Dorsolateral prefrontal cortex (tissue), 120 donors: ENCODE measurements at regions of chr15 and their contacts with region 1.

Region 1: GRCh38 chr15:44426975-44427755 is at the start of gene CTDSPL2:
- DNase-seq: peak; percentile 89 to 99 (median 97)
- H3K4me3 ChIP-seq: peak within 1 kb of the TSS; percentile 58 to 100 (median 92)
- H3K27ac ChIP-seq: peak within 1 kb of the TSS; percentile 92 to 100 (median 98)
- H3K27me3 ChIP-seq: no peaks in the 10 kb centered on the region
- CTCF ChIP-seq: peak in 54 of 56 donors; percentile 22 to 80 (median 60)
- total RNA-seq, gene CTDSPL2: 25.6 to 57.8 (median 37.3) TPM

Region 2: DNA sequence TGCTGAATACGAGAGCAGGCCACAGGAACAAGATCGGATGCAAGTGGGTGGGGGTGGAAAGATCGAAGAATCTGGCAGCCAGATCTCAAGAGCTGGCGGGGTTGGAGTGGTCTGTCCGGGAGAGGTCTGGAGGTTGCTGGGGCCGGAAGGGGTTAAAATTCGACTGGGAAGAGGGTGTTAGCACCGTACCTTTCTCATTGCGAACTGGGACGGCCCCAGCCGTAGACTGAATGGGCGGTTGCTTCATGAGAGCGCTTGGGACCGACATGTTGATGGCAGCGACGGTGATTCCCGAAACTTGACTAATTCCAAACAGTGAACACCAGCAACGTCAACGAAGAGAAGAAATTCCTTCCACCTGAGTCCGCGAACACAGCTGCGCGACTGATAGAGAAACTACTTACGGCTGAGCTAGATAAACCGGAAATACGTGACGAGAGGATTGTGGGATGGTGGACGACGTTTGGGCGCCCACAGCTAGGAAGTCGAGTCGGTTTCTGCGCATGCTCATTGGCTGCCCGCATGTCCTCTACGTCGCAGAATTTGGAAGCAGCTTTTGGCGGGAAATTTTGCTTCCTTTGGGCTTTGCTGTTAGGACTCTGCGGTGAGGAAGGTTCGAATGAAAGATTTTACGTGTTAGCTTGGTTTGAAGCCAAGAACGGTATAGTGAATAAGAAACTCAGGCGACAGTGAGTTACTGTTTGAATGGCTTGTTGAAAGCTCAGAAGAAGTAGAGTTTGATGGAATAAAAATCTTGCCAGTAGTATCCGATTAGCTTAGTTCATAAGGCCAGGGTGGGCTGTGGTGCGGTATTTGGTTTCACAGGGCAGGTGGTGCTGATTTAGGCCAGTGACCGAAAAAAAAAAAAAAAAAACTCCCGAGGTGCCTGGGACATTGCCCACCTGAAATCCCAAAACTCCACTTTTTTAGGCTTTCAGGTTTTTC is 602.6 kb before region 1 on chr15 and contains the start of gene MFAP1:
- intact Hi-C with region 1: loop called in 1 of 2 experiments (anchors 10 kb)
- DNase-seq: peak; percentile 88 to 97 (median 94)
- H3K4me3 ChIP-seq: peak within 1 kb of the TSS; percentile 63 to 99 (median 89)
- H3K27ac ChIP-seq: peak within 1 kb of the TSS in 58 of 59 donors; percentile 9 to 95 (median 83)
- H3K27me3 ChIP-seq: no peaks in the 10 kb centered on the region
- CTCF ChIP-seq: peak in 35 of 56 donors; percentile 10 to 58 (median 28)
- total RNA-seq, gene MFAP1: 15.9 to 30.4 (median 23.4) TPM

Region 3: DNA sequence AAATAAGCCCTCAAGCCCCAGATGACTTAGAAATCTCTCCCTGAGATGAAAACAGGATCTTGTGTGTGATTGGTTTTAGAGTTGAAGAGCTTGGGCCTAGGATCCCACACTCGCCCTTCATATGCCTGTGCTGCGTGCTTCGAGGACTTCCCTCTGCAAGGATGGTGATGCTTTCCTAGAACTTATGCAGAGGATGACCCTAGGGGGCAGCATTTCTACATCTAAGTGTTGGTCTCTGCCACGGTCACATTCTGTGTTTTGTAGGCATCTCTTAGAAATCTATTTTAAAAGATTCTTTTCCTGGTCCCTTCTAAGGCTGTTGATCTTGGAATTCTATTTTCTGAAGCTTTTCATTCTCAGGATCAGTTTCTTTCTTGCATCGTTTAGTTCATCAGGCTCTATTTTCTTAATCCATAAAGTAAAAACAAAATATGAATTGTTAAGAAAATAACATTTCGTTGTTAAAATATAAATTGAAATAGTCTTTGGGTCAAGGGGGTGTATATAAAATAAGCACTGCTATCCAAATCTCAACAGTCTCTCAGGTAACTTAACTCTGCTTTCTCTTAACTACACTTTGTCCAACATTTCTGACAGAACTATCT is 554.6 kb before region 1 on chr15:
- intact Hi-C with region 1: loop called in 1 of 2 experiments (anchors 10 kb)
- DNase-seq: peak in 8 of 10 donors; percentile 35 to 81 (median 61)
- H3K4me3 ChIP-seq: no peak overlapping the region
- H3K27ac ChIP-seq: peak overlapping the region in 43 of 59 donors; percentile 0 to 75 (median 50)
- H3K27me3 ChIP-seq: no peaks in the 10 kb centered on the region
- CTCF ChIP-seq: peak; percentile 40 to 89 (median 74)

Region 4: DNA sequence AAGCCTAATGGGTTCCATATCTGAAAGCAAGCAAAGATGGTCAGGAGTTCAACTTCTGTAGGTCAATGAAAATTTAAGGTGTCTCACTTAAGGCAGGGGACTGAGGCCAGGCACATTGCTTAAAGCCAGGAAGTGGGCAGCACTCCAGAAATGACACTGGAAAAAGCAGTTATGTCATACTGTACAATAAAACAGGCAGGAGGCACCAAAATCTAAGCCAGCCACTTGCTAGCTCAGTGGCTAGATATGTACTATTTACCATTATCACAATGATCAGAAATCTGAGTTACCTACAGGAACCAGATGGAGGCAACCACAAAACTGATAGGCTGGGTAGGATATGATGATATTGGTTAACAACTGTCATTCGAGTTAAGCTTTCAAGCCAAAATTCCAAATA is 289.4 kb before region 1 on chr15:
- intact Hi-C with region 1: no loop called
- DNase-seq: no peak
- H3K4me3 ChIP-seq: no peak overlapping the region
- H3K27ac ChIP-seq: peak overlapping the region in 14 of 59 donors; percentile 6 to 65 (median 26)
- H3K27me3 ChIP-seq: no peaks in the 10 kb centered on the region
- CTCF ChIP-seq: no peak

Region 5: GRCh38 chr15:44195151-44195740 is 231.9 kb before region 1 on chr15 and contains the start of gene FRMD5:
- intact Hi-C with region 1: loop called in 1 of 2 experiments (anchors 5 kb)
- DNase-seq: peak; percentile 92 to 97 (median 96)
- H3K4me3 ChIP-seq: peak within 1 kb of the TSS; percentile 60 to 98 (median 86)
- H3K27ac ChIP-seq: peak within 1 kb of the TSS; percentile 36 to 100 (median 92)
- H3K27me3 ChIP-seq: no peaks in the 10 kb centered on the region
- CTCF ChIP-seq: peak; percentile 23 to 80 (median 61)
- total RNA-seq, gene FRMD5: 19.7 to 90.4 (median 41.9) TPM

Region 6: DNA sequence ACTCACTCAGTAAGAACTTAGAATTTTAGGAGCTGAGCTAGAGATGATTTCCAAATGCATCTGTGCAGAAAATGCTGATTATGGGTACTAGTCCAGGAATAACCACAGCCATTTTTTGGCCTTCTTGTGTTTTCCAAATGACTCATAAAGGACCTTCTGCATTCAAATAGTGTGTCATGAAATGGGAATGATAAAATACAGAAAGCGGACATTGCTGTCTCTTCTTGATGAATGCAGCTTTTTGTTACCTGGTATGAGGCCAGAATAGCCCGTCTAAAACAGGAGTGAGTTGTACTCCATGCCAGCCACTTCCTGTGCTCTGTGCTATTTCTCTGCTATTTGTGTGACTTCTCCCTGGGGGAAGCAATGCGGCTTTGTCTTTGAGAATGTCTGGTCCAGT is 211.6 kb before region 1 on chr15:
- intact Hi-C with region 1: loop called in 1 of 2 experiments (anchors 10 kb)
- DNase-seq: no peak
- H3K4me3 ChIP-seq: no peak overlapping the region
- H3K27ac ChIP-seq: peak overlapping the region in 27 of 59 donors; percentile 1 to 72 (median 21)
- H3K27me3 ChIP-seq: no peaks in the 10 kb centered on the region
- CTCF ChIP-seq: no peak

Region 7: DNA sequence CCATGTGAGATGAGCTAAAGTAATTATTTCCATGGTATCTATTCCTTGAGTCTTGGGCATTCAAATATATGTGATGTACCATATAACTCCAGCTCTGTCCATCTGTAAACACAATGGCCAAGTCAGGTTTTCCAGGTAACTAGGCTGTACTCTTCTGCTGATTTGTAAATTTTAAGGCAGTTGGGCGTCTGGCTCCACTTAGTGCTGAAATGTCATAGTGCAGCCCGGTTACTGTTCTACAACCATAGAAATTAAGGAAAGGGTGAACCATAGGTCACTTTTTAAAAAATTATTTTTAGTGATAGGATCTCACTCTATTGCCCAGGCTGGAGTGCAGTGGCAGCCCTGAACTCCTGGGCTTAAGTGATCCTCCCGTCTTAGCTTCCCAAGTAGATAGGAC is 183.3 kb before region 1 on chr15:
- intact Hi-C with region 1: no loop called
- DNase-seq: no peak
- H3K4me3 ChIP-seq: no peak overlapping the region
- H3K27ac ChIP-seq: peak overlapping the region in 40 of 59 donors; percentile 13 to 99 (median 64)
- H3K27me3 ChIP-seq: no peaks in the 10 kb centered on the region
- CTCF ChIP-seq: peak in 41 of 56 donors; percentile 8 to 55 (median 32)

Region 8: DNA sequence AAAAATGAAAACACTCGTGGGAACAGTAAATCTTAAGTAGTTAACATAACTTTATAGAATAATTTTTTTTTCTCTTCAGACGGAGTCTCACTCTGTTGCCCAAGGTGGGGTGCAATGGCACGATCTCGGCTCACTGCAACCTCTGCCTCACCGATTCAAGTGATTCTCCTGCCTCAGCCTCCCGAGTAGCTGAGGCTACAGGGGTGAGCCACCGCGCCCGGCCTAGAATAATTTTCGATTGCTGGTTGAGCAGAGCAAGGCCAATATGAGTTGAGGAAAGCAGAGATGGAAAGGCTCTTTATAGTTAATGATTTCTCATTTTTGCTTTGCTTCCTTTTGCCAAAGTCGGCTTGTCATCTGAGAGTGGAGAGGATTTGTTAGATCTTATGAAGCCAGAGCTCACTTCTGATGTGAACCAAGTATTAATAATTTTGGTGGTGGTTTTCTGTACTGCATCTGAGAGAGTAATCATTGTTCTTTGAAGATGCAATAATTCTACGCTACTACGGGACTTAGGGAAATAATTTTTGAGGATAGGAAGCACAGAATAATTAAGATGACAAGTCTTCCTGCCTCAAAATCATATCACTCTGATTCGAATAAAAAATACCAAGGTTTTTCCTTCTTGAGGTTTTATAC is 140.2 kb before region 1 on chr15:
- intact Hi-C with region 1: loop called (anchors 2 to 5 kb)
- DNase-seq: no peak
- H3K4me3 ChIP-seq: peak overlapping the region; percentile 62 to 97 (median 88)
- H3K27ac ChIP-seq: peak overlapping the region in 56 of 59 donors; percentile 16 to 98 (median 96)
- H3K27me3 ChIP-seq: no peaks in the 10 kb centered on the region
- CTCF ChIP-seq: peak in 28 of 56 donors; percentile 7 to 49 (median 28)

Region 9: GRCh38 chr15:44536962-44537734 is 110.0 kb after region 1 on chr15 and contains the start of gene EIF3J:
- intact Hi-C with region 1: loop called in 1 of 2 experiments (anchors 2 kb)
- DNase-seq: peak; percentile 86 to 96 (median 94)
- H3K4me3 ChIP-seq: peak within 1 kb of the TSS; percentile 67 to 99 (median 91)
- H3K27ac ChIP-seq: peak within 1 kb of the TSS; percentile 86 to 99 (median 96)
- H3K27me3 ChIP-seq: no peaks in the 10 kb centered on the region
- CTCF ChIP-seq: peak in 7 of 56 donors; percentile 0 to 42 (median 7)
- total RNA-seq, gene EIF3J: 45.5 to 100 (median 65.5) TPM